ENCODE measurements at regions of chr2 and their contacts with region 1.

Region 1: GRCh38 chr2:18987592-18988073 is 370.8 kb downstream of the OSR1 start:
- DNase-seq: peak; percentile 72
- ATAC-seq: peak; percentile 36

Region 2: DNA sequence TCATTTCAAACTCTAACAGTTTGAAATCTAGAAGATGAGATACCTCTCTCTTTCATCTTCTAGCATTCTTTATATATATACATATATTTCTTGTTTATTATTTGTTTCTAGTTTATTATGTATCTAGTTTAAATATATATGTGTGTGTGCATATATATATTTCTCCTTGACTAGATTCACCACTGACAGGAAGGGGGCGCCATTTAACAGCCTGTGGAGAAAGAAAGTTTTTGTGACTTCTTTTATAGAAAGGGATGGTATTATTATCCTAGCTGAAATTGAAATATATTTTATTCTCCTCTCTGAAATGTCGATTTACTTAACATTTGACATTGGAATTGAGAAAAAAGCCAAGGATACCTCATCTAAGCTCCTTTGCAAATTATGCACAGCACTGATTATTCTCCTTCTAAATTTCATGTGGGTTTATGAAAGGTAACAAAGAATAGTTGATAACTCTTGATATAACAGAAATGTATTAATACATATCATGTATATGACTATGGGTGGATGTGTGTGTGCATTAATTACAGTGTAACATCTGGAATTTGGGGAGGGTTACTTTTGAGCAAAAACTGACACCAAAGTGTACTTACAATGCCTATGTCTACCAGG is 237.6 kb before region 1 on chr2:
- intact Hi-C with region 1: loop called (anchors 10 kb)
- DNase-seq: no peak
- ATAC-seq: no peak

Region 3: DNA sequence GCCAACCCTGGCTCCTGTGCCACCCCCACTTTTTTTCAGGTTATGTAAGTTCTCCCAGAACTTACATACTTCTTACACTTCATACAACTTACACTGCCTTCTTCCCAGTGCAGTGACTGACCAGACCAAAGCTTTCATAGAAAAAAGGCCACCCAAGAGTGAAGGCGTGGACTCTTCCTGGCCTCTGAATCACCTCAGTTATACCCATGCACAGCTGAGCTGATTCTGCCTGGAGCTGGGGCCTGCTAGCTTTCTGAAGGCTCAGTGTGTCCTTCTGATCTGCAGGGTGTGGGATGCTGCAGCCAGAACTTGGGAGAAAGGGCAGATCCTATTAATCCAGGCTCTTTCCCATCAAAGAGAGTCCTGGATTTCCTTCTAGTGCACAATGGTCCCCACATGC is 698.1 kb after region 1 on chr2:
- intact Hi-C with region 1: loop called (anchors 5 kb)
- DNase-seq: no peak
- ATAC-seq: no peak

Measured in Right ventricle myocardium inferior (tissue), 1 donor.